Ascending aorta (tissue), 2 donors: ENCODE measurements at regions of chr2 and their contacts with region 1.

Region 1: DNA sequence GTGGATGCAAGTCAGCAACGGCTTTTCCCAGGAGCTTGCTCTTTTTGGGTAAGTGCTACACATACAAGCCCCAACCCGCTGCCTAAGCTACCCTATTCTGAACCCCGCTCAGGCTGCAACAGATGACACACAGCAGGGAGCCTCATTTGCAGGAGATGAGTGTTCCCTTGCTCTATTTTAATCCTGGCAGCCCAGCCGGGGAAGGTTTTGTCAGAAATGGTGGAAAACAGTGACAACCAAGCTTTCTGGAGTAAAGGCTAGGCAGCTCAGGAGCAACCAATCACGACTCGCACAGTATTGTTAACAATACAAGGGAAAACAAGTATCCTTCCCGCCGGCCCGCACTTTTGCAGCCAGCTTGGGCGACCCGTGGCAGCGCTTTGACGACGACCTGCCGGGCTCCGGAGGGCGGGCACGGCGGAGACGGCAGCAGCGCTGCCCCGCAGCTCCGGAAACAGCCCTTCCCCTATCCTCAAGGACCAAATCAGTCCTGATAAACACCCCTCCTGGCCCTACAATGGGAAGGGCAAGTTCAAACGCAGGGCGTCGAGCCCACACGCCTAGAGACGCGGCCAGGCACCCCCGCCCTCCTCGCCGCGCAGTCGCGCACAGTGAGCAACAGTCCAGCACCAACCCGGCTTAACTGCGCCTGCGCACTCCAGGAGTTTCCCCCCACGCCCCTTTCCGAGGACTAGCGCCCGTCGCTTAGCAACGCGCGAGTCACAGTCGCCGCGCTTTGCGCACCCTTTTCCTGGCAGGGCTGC is 74.3 kb upstream of the TSPYL6 start:
- DNase-seq: peak; percentile 87 to 98
- H3K4me3 ChIP-seq: peak overlapping the region; percentile 67 to 69
- H3K27ac ChIP-seq: peak overlapping the region; percentile 88 to 96
- H3K4me1 ChIP-seq: peaks cover 2% of the 10 kb centered on the region in 2 donors
- H3K27me3 ChIP-seq: no peaks in the 10 kb centered on the region
- CTCF ChIP-seq: no peak

Region 2: DNA sequence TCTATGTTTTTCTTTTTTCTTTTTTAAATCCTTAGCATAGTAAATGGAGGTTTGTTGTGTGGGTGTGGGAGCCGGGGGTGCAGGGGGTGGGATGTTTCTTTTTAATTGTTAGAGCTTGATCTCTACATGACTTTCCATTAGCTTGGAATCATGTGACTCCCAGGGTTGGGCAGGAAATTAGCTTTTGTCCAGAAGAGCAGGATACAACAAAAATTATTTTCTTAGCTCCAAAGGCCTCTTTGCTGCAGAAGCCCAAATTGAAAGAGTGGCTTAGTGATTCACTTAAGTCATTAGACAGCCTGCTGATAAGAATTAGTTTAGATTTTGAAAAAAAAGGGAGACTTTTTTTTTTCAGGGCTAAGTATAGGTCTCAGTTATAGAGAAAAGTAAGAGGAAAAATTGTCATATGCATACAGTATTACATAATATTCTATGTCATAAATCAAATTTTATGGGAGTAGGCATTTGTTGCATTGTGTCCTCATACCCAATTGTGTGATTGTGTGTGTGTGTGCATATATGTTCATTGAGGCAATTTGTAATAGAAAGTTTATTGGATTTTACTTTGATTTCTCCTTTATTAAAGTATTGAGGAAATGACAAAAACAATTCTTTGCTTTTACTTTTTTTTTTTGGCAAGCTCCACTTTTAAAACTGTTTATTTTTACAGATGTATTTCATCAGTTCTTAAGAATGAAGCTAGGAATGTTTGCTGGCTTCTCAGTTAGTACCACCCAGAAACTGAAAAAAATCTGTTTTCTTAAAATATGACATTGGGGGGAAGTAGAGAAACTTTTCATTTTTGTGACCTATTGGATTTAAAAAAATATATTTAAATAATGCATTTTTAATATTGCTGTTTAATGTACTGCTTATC is 121.7 kb before region 1 on chr2:
- intact Hi-C with region 1: loop called (anchors 2 kb)
- DNase-seq: no peak
- H3K4me3 ChIP-seq: no peak overlapping the region
- H3K27ac ChIP-seq: peak overlapping the region; percentile 10 to 55
- H3K4me1 ChIP-seq: peaks cover 0 to 30% of the 10 kb centered on the region in 2 donors
- H3K27me3 ChIP-seq: no peaks in the 10 kb centered on the region
- CTCF ChIP-seq: no peak

Region 3: DNA sequence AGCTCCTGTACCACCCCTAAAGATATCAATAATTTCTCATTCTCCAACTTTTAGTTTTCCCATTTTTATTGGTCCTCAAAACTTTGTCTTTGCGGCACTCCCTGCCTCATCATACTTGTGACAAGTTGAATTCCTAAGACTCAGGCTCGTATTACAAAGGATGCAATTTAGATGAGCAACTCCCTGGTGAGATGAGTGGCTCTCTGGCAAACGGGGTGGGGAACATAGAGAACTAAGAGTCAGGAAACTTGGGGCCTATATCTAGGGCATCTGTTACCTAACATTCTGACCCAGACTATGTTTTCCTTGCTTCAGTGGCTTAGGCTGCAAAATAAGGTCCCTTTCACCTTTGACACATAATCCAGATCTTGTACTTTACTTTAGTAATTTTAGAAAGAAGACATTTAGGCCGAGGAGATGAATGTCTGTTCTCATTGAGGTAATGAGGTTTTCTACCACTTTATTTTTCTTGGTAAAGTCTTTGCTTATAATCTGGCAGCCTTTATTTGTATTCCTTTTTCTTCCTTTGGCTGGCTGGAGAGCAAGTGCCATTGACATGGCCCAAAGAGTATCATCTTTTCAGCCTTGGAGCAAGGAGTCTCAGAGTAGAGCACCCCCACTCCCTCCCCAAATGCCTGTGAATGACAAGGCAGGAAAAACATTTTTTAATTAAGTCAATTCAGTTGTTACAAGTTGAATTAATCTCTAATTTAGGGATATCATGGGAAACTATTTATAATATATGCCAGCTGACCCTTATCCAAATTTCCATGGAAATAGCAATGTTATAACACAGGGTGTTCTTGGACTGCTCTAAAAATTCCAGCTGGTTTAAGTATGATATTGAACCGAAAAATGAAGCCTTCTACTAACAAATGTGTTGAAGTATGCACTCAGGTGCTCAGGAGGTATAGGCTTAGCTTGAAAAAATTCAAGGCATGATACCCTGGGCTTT is 89.6 kb before region 1 on chr2:
- intact Hi-C with region 1: loop called (anchors 5 kb)
- DNase-seq: peak in 1 of 2 donors; percentile 79
- H3K4me3 ChIP-seq: no peak overlapping the region
- H3K27ac ChIP-seq: peak overlapping the region; percentile 74 to 78
- H3K4me1 ChIP-seq: peaks cover 8 to 26% of the 10 kb centered on the region in 2 donors
- H3K27me3 ChIP-seq: no peaks in the 10 kb centered on the region
- CTCF ChIP-seq: no peak

Region 4: GRCh38 chr2:54673501-54673998 is 343.2 kb after region 1 on chr2:
- intact Hi-C with region 1: no loop called
- DNase-seq: peak in 1 of 2 donors; percentile 88
- H3K4me3 ChIP-seq: peak overlapping the region; percentile 8 to 42
- H3K27ac ChIP-seq: peak overlapping the region; percentile 76 to 77
- H3K4me1 ChIP-seq: no peaks in the 10 kb centered on the region
- H3K27me3 ChIP-seq: no peaks in the 10 kb centered on the region
- CTCF ChIP-seq: no peak